ENCODE measurements at regions of chr16 and their contacts with region 1.

Region 1: DNA sequence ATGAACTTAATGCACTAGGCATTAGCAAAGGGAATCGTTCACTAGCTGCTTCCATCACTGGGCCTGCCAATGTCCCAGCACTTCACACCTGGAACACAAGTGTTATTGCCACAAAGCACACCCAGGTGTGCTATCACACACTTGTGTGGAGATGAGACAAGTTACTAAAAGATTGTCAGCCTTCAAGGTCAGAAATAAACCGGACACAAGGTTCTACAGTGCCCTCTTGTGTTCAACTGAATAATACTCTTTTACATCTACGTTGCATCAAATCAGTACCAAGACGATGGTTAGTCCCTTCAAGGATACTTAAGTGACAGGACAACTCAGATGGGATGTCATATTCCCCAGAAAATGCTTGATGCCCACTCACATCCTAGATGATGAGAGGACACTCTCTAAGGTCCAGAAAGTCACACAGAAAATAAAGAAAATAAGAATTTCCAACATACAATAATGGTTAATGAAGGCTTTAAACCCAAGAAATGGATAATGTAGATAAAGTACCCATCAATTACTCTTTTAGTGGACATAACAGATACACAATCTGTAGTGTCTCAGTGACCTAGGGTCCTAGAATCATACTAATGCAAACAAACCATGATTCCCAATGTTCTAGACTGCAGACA is 16.4 kb upstream of the GLG1 start:
- DNase-seq: no peak
- ATAC-seq: no peak
- H3K4me3 Mint-ChIP-seq: no peak overlapping the region
- H3K27ac Mint-ChIP-seq: peak overlapping the region; percentile 26
- H3K4me1 Mint-ChIP-seq: peaks cover 30% of the 10 kb centered on the region
- H3K27me3 Mint-ChIP-seq: no peaks in the 10 kb centered on the region
- CTCF ChIP-seq: peak; percentile 68

Region 2: GRCh38 chr16:74485941-74486340 is 137.4 kb before region 1 on chr16:
- CTCF ChIA-PET with region 1: interaction called, 10 read pairs
- POLR2A ChIA-PET with region 1: no interaction called
- intact Hi-C with region 1: no loop called
- DNase-seq: no peak
- ATAC-seq: no peak
- H3K4me3 Mint-ChIP-seq: no peak overlapping the region
- H3K27ac Mint-ChIP-seq: no peak overlapping the region
- H3K4me1 Mint-ChIP-seq: peaks cover 8% of the 10 kb centered on the region
- H3K27me3 Mint-ChIP-seq: no peaks in the 10 kb centered on the region
- CTCF ChIP-seq: no peak

Region 3: GRCh38 chr16:74650966-74651567 is 27.7 kb after region 1 on chr16:
- CTCF ChIA-PET with region 1: interaction called, 20 read pairs
- POLR2A ChIA-PET with region 1: interaction called, 5 read pairs
- intact Hi-C with region 1: no loop called
- DNase-seq: no peak
- ATAC-seq: no peak
- H3K4me3 Mint-ChIP-seq: no peak overlapping the region
- H3K27ac Mint-ChIP-seq: no peak overlapping the region
- H3K4me1 Mint-ChIP-seq: peaks cover 27% of the 10 kb centered on the region
- H3K27me3 Mint-ChIP-seq: no peaks in the 10 kb centered on the region
- CTCF ChIP-seq: peak; percentile 63

Measured in activated CD8-positive, alpha-beta T cell treated with anti-CD3 and anti-CD28 coated beads for 36 hours (primary cell).